Activated T-helper 2 cell treated with anti-CD3 and anti-CD28 coated beads, Interferon-gamma antibody, Interleukin-2, Interleukin-4, amounts not matched to agents 10 μg/mL and 5 μg/mL and 100 μg/mL, durations not matched to agents 14 hours and 24 hours and 36 hours (primary cell): ENCODE measurements at regions of chr3 and their contacts with region 1.

Region 1: DNA sequence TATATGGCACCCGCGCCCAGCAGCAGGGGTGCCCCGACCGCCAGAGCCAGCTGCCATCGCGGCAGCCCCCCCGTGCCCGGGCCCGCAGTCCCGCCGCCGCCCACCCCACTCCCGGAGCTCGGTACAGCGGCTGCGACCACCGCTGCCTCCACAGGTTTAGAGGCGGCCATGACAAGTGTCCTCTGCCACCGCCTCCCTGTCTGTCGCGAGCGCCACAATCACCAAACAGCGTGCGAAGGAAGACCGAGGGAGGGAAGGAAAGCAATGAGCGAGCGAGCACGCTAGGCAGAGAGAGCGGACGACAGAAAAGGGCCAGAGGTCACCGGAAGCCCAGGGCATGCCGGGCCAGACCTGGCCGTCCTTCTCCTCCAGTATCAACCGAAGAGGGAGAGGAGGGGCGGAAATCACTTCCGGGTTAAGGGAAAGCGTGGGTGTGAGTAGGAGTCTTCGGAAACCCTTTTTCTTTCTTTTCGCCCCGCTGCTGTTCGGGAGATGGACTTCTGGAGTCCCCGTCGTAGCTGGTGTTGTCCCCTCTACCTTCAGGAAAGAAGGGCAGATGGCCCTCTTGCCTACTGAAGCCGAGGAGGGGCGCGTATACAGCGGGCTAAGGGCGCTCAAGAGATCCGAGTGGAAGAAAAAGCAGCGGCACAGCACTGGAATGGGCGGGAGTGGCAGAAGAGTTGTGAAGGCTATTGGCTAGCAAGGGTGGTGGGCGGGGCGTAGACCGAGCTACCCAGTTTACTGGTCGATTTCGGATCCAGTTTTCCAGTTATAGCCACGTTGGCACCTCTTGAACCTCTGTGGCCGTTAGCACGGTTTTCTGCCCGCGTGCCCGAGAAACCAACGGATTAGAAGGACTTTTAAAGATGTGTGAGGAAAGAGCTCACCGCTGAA is at the starts of genes LNP1 and TOMM70:
- DNase-seq: peak; percentile 92
- H3K4me3 Mint-ChIP-seq: peak within 1 kb of the TSS; percentile 90
- H3K27ac Mint-ChIP-seq: peak within 1 kb of the TSS; percentile 98
- H3K4me1 Mint-ChIP-seq: peaks cover 41% of the 10 kb centered on the region
- H3K27me3 Mint-ChIP-seq: no peaks in the 10 kb centered on the region
- total RNA-seq, gene LNP1: 2.0 and 2.8 TPM in 2 replicates
- total RNA-seq, gene TOMM70: 52.8 and 54.4 TPM in 2 replicates

Region 2: GRCh38 chr3:99817437-99818240 is 583.4 kb before region 1 on chr3 and contains the start of gene CMSS1:
- intact Hi-C with region 1: loop called (anchors 2 kb)
- DNase-seq: peak; percentile 92
- H3K4me3 Mint-ChIP-seq: peak within 1 kb of the TSS; percentile 95
- H3K27ac Mint-ChIP-seq: peak within 1 kb of the TSS; percentile 96
- H3K4me1 Mint-ChIP-seq: peaks cover 42% of the 10 kb centered on the region
- H3K27me3 Mint-ChIP-seq: no peaks in the 10 kb centered on the region
- total RNA-seq, gene CMSS1: 138 and 143 TPM in 2 replicates

Region 3: DNA sequence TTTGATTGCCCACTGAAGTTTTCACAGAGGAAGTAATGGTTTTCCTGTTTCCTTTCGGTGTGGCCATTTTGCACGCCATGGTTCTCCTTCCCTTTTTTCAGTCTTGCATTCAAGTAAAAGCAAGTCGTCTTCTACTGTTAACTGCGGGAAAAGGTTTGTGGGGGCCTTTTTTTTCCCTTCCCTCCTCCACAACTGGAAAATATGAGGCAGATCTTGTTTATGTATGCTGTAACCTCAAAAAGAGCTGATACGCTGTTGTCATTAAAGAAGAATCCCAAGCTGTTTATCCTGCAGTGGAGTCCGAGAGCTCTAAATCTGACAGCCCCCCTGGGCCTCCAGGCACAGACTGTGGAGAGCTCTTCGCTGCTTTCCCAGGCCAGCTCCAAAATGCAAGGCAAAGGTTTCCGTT is 327.1 kb before region 1 on chr3:
- intact Hi-C with region 1: loop called (anchors 10 kb)
- DNase-seq: no peak
- H3K4me3 Mint-ChIP-seq: peak overlapping the region; percentile 58
- H3K27ac Mint-ChIP-seq: peak overlapping the region; percentile 90
- H3K4me1 Mint-ChIP-seq: peaks cover 72% of the 10 kb centered on the region
- H3K27me3 Mint-ChIP-seq: no peaks in the 10 kb centered on the region

Region 4: DNA sequence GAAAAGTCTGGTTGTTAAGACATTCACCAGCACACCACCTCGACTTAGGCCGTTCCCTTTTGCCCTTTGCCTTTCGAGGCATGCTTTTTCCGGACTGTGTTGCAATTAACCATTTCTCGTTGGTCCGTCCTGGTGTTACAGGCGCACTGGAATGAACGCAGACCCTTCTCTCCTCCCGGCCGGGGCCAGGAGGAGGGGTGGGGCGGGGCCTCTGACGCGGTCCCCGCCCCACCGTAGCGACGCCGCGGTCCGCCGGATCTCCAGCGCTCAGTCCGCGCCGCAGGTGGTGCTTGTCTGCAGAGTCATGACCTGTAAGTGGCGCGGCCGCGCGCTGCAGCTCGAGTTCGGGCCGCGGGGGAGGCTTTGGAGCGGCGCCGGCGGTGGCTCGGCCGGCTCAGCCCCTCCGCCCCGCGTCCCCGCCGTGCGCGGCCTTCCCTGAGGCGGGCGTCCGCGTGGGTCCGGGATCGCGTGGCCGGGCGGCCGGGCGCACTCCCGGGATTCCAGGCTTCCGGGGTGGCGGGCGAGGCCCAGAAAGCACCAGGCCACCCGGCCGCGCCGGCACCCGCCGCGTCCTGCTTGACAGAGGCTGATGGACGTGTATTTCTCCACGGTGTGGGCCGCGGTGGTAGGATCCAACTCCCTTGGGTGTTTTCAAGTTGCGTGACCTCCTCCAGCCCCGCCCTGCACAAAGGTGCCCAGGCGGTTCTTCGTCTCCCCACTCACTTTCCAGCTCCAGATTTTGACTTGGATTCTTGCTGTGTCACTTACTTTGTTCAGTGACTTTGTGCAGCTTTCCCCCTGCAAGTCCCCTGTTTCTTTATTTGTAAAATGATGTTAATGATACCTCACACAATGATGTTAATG is 66.3 kb before region 1 on chr3 and contains the start of gene NIT2:
- intact Hi-C with region 1: loop called (anchors 1 kb)
- DNase-seq: peak; percentile 74
- H3K4me3 Mint-ChIP-seq: peak within 1 kb of the TSS; percentile 99
- H3K27ac Mint-ChIP-seq: peak within 1 kb of the TSS; percentile 99
- H3K4me1 Mint-ChIP-seq: peaks cover 18% of the 10 kb centered on the region
- H3K27me3 Mint-ChIP-seq: no peaks in the 10 kb centered on the region
- total RNA-seq, gene NIT2: 73.0 and 73.7 TPM in 2 replicates

Region 5: GRCh38 chr3:100500320-100500880 is 99.4 kb after region 1 on chr3:
- intact Hi-C with region 1: no loop called
- DNase-seq: no peak
- H3K4me3 Mint-ChIP-seq: no peak overlapping the region
- H3K27ac Mint-ChIP-seq: no peak overlapping the region
- H3K4me1 Mint-ChIP-seq: no peaks in the 10 kb centered on the region
- H3K27me3 Mint-ChIP-seq: peaks cover 16% of the 10 kb centered on the region

Region 6: DNA sequence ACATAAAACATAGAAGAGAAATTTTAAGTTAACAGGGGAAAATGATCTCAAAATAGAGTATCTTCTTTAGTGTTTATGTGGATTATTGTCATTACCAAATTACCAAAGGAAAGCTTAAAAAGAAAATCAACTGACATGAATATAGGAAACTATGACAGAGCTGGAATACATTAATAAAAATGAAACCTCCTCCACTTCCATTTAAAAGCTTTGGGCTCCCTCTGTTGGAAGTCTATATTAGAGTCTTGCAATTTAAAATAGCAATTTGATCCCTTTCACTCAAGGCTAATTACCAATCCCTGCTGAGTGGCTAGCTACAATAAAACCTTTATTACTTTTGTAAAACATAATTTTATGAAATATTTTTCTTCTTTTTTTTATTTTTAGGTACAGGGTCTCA is 980.8 kb after region 1 on chr3:
- intact Hi-C with region 1: loop called (anchors 2 kb)
- DNase-seq: no peak
- H3K4me3 Mint-ChIP-seq: no peak overlapping the region
- H3K27ac Mint-ChIP-seq: no peak overlapping the region
- H3K4me1 Mint-ChIP-seq: peaks cover 31% of the 10 kb centered on the region
- H3K27me3 Mint-ChIP-seq: no peaks in the 10 kb centered on the region

Region 7: DNA sequence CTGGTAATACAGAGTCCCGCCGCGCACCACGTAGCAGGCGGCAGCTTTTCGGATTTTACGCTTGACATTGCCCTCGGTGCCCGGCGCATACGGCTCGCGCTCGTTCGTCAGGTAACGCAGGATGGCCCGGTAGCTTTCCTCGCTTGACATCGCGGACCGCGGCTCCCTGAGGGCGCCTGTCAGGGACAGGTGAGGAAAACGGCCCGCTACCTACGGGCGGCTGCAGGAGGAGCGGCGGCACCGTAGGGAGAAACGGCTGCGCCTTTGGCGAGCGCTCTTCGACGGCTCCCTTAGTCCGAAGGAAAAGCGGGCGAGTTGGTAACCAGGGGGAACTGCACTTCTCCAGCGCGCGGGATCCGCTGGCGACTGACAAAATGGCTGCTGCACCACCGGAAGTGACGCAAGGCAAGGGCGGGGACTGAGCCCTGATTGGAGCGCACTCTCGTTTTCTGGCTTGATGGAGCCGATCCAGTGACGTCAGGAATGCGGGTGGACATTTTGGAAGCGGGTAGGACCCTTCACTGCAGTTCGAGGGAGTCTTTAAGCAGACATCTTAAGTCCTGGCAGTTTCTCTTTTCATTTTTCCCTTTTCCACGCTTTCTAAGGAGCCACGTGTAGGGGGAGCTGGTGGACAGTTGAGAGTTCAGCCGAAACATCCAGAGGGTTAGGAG is 1275.9 kb after region 1 on chr3 and contains the start of gene ZBTB11:
- intact Hi-C with region 1: loop called (anchors 2 kb)
- DNase-seq: peak; percentile 99
- H3K4me3 Mint-ChIP-seq: peak within 1 kb of the TSS; percentile 94
- H3K27ac Mint-ChIP-seq: peak within 1 kb of the TSS; percentile 94
- H3K4me1 Mint-ChIP-seq: peaks cover 46% of the 10 kb centered on the region
- H3K27me3 Mint-ChIP-seq: no peaks in the 10 kb centered on the region
- total RNA-seq, gene ZBTB11: 27.5 and 29.6 TPM in 2 replicates